Endothelial cell of umbilical vein (primary cell): ENCODE measurements at regions of chr4 and their contacts with region 1.

Region 1: DNA sequence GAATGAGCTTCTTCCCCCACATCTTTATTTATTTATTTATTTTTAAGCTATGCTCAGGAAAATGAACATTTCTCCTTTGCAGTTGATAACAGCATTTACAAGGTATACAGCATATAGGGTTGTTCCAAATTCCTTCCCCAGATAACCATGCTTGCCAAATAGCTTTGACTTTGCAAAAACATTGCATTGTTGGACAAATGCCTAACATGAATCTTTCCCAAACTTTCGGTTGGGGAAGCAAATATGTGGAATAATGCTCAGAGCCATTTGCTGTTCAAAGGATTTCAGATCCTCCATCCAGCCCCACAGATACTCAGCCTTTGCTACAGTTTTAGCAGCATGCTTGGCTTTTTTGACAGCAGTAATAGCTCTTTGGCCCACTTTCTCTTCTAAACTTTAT is 127.2 kb upstream of the AGA start:
- DNase-seq: no peak
- H3K4me3 ChIP-seq: no peak overlapping the region
- H3K27ac ChIP-seq: no peak overlapping the region
- H3K4me1 ChIP-seq: no peaks in the 10 kb centered on the region
- H3K27me3 ChIP-seq: no peaks in the 10 kb centered on the region
- CTCF ChIP-seq: no peak
- POLR2A ChIP-seq: no peak

Region 2: GRCh38 chr4:177147668-177148067 is 421.8 kb before region 1 on chr4:
- CTCF ChIA-PET with region 1: no interaction called
- POLR2A ChIA-PET with region 1: no interaction called
- dilution Hi-C with region 1: no loop called
- intact Hi-C with region 1: no loop called
- DNase-seq: no peak
- H3K4me3 ChIP-seq: no peak overlapping the region
- H3K27ac ChIP-seq: no peak overlapping the region
- H3K4me1 ChIP-seq: no peaks in the 10 kb centered on the region
- H3K27me3 ChIP-seq: no peaks in the 10 kb centered on the region
- CTCF ChIP-seq: no peak
- POLR2A ChIP-seq: no peak

Region 3: GRCh38 chr4:178192611-178193010 is 623.2 kb after region 1 on chr4:
- CTCF ChIA-PET with region 1: no interaction called
- POLR2A ChIA-PET with region 1: interaction called, 12 read pairs
- dilution Hi-C with region 1: no loop called
- intact Hi-C with region 1: no loop called
- DNase-seq: no peak
- H3K4me3 ChIP-seq: no peak overlapping the region
- H3K27ac ChIP-seq: no peak overlapping the region
- H3K4me1 ChIP-seq: no peaks in the 10 kb centered on the region
- H3K27me3 ChIP-seq: no peaks in the 10 kb centered on the region
- CTCF ChIP-seq: no peak
- POLR2A ChIP-seq: no peak